ENCODE measurements at regions of chr19 and their contacts with region 1.

Region 1: GRCh38 chr19:51338563-51339312 is 3.2 kb downstream of the VSIG10L start:
- DNase-seq: peak; percentile 95
- ATAC-seq: peak; percentile 74
- H3K4me3 Mint-ChIP-seq: peak overlapping the region; percentile 77
- H3K27ac Mint-ChIP-seq: peak overlapping the region; percentile 82
- H3K4me1 Mint-ChIP-seq: peaks cover 13% of the 10 kb centered on the region
- H3K27me3 Mint-ChIP-seq: peaks cover 1% of the 10 kb centered on the region
- CTCF ChIP-seq: peak; percentile 93

Region 2: DNA sequence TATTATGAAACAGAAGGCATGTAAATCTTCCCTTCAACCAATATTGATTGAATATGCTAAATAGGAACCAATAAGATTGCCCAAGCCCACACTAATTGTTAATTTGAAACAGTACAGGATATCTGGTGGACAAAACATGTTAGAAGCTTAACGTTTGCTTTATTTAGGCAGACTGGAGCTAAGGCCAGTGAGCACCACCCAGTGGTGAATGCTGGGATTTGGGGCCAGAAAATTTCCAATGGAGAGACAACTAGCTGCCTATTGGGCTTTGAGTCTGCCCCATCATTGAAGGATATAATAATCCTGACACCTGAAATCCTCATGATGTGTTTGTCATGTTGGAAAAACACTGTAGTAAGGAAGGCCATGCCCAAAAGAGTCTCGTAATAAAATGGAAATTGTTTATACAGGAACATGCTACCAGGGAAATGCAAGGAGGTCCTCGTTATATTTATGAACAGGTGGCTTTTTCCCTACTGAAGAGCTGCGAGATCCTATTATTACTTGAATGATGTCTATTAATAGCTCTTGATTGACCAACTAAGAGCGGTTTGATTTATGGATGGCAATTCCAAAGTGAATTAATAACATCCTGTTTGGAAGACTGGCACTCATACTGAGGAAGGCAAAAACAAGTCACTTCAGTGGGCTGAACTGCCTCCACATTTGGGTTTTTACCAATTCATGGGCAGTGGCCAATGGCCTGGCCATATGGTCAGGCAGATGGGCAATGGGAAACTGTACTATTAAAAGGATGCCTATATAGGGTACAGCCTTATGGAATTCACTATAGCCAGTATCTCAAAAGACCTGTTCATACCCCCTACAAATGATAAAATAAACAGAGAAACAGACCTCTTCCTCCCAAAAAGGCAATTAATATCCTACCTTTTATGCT is 79.1 kb before region 1 on chr19:
- CTCF ChIA-PET with region 1: no interaction called
- POLR2A ChIA-PET with region 1: no interaction called
- intact Hi-C with region 1: no loop called
- DNase-seq: peak; percentile 70
- ATAC-seq: peak; percentile 48
- H3K4me3 Mint-ChIP-seq: no peak overlapping the region
- H3K27ac Mint-ChIP-seq: no peak overlapping the region
- H3K4me1 Mint-ChIP-seq: peaks cover 9% of the 10 kb centered on the region
- H3K27me3 Mint-ChIP-seq: peaks cover 27% of the 10 kb centered on the region
- CTCF ChIP-seq: peak; percentile 84

Region 3: DNA sequence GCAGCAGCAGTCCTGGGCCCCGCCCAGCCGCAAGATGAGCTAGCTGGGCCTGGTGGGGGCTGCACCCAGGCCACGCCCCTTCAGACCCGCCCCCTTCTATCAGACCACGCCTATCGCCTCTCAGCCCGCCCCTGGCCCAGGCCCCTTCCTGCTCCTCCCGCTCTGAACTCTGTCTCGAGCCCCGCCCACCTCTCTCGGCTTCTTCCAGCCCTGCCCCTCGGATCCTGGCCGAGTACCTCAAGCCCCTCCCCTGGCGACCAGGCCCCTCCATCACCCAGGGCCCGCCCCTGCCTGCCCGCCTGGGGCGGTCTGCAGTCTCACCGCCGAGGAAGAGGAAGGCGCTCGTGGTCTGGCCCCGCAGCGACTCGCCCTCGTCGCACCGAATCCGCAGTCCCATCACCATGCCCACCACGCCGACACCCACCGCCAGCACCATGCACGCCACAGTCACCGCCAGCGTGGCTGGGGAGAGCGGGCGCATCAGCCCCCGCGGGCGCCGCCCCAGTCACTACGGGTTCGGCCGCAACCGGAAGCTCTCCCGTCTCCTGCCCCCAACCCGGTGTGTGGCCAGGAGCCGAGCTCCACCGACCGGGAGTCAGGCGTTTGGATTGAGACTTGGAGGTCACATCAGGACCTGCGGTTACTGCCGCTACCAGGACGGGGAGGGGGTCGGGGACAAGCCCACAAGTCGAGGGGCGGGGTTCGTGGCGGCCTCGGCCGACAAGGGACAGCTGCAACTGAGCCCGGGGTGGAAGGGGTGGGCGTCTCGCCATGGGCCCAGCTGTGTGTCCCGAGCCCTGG is 29.0 kb after region 1 on chr19:
- CTCF ChIA-PET with region 1: interaction called, 23 read pairs
- POLR2A ChIA-PET with region 1: interaction called, 4 read pairs
- intact Hi-C with region 1: no loop called
- DNase-seq: peak; percentile 100
- ATAC-seq: peak; percentile 84
- H3K4me3 Mint-ChIP-seq: peak overlapping the region; percentile 98
- H3K27ac Mint-ChIP-seq: peak overlapping the region; percentile 98
- H3K4me1 Mint-ChIP-seq: peaks cover 45% of the 10 kb centered on the region
- H3K27me3 Mint-ChIP-seq: no peaks in the 10 kb centered on the region
- CTCF ChIP-seq: no peak

Region 4: GRCh38 chr19:51407511-51408131 is 68.9 kb after region 1 on chr19:
- CTCF ChIA-PET with region 1: interaction called, 10 read pairs
- POLR2A ChIA-PET with region 1: no interaction called
- intact Hi-C with region 1: no loop called
- DNase-seq: peak; percentile 63
- ATAC-seq: peak; percentile 85
- H3K4me3 Mint-ChIP-seq: no peak overlapping the region
- H3K27ac Mint-ChIP-seq: no peak overlapping the region
- H3K4me1 Mint-ChIP-seq: peaks cover 9% of the 10 kb centered on the region
- H3K27me3 Mint-ChIP-seq: peaks cover 17% of the 10 kb centered on the region
- CTCF ChIP-seq: peak; percentile 48